ENCODE measurements at regions of chr22 and their contacts with region 1.

Region 1: DNA sequence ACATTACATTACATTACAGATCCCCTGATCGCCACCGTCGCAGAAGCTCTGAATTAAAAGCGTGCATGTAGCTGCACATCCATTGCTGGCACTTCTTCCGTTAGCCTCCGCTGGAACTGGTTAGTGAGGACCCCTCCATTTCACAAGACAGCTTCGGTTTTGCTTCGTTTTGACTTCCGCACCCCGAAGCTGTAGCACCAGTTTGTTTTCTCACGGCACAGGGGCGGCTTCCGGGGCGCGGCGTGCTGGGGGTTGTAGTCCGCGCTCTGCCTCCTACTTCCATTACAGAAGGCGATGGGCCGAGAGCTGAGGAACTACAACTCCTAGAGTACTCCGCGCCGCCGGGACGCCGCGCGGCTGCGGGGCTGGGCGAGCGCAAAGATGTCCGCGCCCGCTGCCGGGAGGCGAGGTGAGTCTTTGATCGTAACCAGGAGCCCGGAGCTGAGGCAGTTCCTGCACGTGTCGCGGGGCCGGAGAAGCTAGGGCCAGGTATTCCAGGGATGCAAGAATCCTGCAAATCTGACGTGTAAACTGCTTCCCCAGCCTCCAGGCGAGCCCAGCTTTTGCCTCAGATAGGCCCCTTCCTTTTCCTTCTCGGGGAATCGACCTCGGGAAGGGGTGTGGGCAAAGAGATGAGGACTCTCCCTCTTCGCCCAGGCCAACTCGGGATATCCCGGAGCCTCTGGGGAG is at the start of gene PEX26:
- DNase-seq: peak; percentile 92 to 98 (median 97)
- H3K4me3 ChIP-seq: peak within 1 kb of the TSS; percentile 62 to 99 (median 93)
- H3K27ac ChIP-seq: peak within 1 kb of the TSS; percentile 30 to 96 (median 88)
- H3K27me3 ChIP-seq: no peaks in the 10 kb centered on the region
- CTCF ChIP-seq: peak in 41 of 56 donors; percentile 11 to 57 (median 36)
- total RNA-seq, gene PEX26: 40.8 to 77.7 (median 61.3) TPM

Region 2: GRCh38 chr22:17830043-17830961 is 247.5 kb before region 1 on chr22:
- intact Hi-C with region 1: loop called (anchors 1 kb)
- DNase-seq: peak; percentile 74 to 94 (median 89)
- H3K4me3 ChIP-seq: no peak overlapping the region
- H3K27ac ChIP-seq: peak overlapping the region in 57 of 59 donors; percentile 5 to 88 (median 75)
- H3K27me3 ChIP-seq: no peaks in the 10 kb centered on the region
- CTCF ChIP-seq: peak; percentile 93 to 100 (median 99)

Region 3: GRCh38 chr22:17897426-17897825 is 180.4 kb before region 1 on chr22:
- intact Hi-C with region 1: loop called (anchors 1 to 5 kb)
- DNase-seq: no peak
- H3K4me3 ChIP-seq: no peak overlapping the region
- H3K27ac ChIP-seq: peak overlapping the region in 51 of 59 donors; percentile 7 to 95 (median 74)
- H3K27me3 ChIP-seq: no peaks in the 10 kb centered on the region
- CTCF ChIP-seq: no peak

Region 4: GRCh38 chr22:18001040-18001893 is 76.5 kb before region 1 on chr22:
- intact Hi-C with region 1: loop called (anchors 1 kb)
- DNase-seq: peak; percentile 82 to 92 (median 89)
- H3K4me3 ChIP-seq: peak overlapping the region; percentile 56 to 96 (median 83)
- H3K27ac ChIP-seq: peak overlapping the region; percentile 76 to 99 (median 97)
- H3K27me3 ChIP-seq: no peaks in the 10 kb centered on the region
- CTCF ChIP-seq: peak in 52 of 56 donors; percentile 12 to 79 (median 48)

Region 5: GRCh38 chr22:18044548-18045271 is 33.1 kb before region 1 on chr22:
- intact Hi-C with region 1: loop called (anchors 1 to 2 kb)
- DNase-seq: peak in 9 of 10 donors; percentile 89 to 97 (median 91)
- H3K4me3 ChIP-seq: peak overlapping the region in 22 of 59 donors; percentile 2 to 46 (median 18)
- H3K27ac ChIP-seq: peak overlapping the region; percentile 79 to 100 (median 98)
- H3K27me3 ChIP-seq: no peaks in the 10 kb centered on the region
- CTCF ChIP-seq: peak in 13 of 56 donors; percentile 6 to 29 (median 17)